ENCODE measurements at regions of chr7 and their contacts with region 1.

Region 1: GRCh38 chr7:103074519-103075336 is at the starts of genes ARMC10 and FBXL13:
- DNase-seq: peak; percentile 87
- ATAC-seq: peak; percentile 91
- H3K4me3 ChIP-seq: peak within 1 kb of the TSS; percentile 93
- H3K27ac ChIP-seq: peak within 1 kb of the TSS; percentile 79
- H3K4me1 ChIP-seq: peaks cover 2% of the 10 kb centered on the region; the same call in 1 of the 2 replicates
- H3K27me3 ChIP-seq: no peaks in the 10 kb centered on the region
- CTCF ChIP-seq: peak; percentile 29; the same call in 1 of the 2 replicates
- POLR2A ChIP-seq: peak; percentile 51; the same call in 1 of the 2 replicates
- RAD21 ChIP-seq: no peak
- total RNA-seq, gene ARMC10: 21.0 and 32.5 TPM in 2 replicates
- total RNA-seq, gene FBXL13: 0.36 and 0.83 TPM in 2 replicates

Region 2: DNA sequence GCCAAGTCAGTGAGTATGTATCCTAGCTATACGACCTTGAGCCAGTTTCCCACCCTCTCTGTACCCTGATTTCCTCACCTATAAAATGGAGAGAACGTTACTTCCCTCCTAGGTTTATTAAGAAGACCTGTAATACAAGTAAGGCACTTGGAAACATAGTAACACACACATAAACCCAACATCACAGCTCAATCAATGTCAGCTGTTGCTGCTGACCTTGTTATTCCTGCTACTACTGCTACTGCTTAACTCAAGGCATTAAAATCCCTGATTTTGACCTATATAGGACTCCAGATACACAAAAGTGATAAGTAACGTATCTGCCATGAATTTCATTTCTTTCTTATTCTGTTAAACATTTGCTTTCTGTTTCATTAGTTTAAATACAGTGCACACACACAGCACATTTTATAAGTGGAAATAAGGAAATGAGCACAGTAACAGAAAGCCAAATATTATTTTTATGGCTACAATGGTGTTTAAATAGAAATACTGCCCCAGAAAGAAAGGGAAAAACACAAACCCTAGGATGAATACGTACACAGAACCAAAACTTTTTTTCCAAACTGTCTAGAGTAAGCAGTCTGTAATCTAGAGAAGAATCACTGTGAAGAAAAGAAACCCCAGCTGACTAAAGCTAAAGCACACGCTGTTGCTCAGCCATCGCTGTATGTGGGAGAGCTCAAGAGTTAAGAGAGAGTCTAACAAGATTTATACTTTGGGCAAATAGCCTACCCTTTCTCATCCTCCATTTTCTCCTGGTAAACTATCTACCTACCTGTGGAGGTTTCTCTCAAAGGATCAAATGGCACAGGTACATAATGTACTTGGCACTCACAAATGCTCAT is 55.2 kb after region 1 on chr7:
- CTCF ChIA-PET with region 1: no interaction called
- POLR2A ChIA-PET with region 1: no interaction called
- dilution Hi-C with region 1: no loop called
- in situ Hi-C with region 1: no loop called
- intact Hi-C with region 1: loop called (anchors 5 kb)
- DNase-seq: no peak
- ATAC-seq: peak; percentile 40
- H3K4me3 ChIP-seq: no peak overlapping the region
- H3K27ac ChIP-seq: no peak overlapping the region
- H3K4me1 ChIP-seq: peaks cover 1% of the 10 kb centered on the region; the same call in 1 of the 2 replicates
- H3K27me3 ChIP-seq: no peaks in the 10 kb centered on the region
- CTCF ChIP-seq: no peak
- POLR2A ChIP-seq: no peak
- RAD21 ChIP-seq: no peak

Region 3: GRCh38 chr7:103148994-103149807 is 74.5 kb after region 1 on chr7 and contains the start of gene NAPEPLD:
- CTCF ChIA-PET with region 1: no interaction called
- POLR2A ChIA-PET with region 1: no interaction called
- dilution Hi-C with region 1: no loop called
- in situ Hi-C with region 1: no loop called
- intact Hi-C with region 1: loop called (anchors 1 kb)
- DNase-seq: peak; percentile 83
- ATAC-seq: peak; percentile 96
- H3K4me3 ChIP-seq: peak within 1 kb of the TSS; percentile 97
- H3K27ac ChIP-seq: peak within 1 kb of the TSS; percentile 99
- H3K4me1 ChIP-seq: no peaks in the 10 kb centered on the region; the same call in 1 of the 2 replicates
- H3K27me3 ChIP-seq: no peaks in the 10 kb centered on the region
- CTCF ChIP-seq: no peak
- POLR2A ChIP-seq: peak; percentile 65
- RAD21 ChIP-seq: no peak
- total RNA-seq, gene NAPEPLD: 3.4 and 3.6 TPM in 2 replicates